Panc1 (cell line): ENCODE measurements at regions of chr2 and their contacts with region 1.

Region 1: DNA sequence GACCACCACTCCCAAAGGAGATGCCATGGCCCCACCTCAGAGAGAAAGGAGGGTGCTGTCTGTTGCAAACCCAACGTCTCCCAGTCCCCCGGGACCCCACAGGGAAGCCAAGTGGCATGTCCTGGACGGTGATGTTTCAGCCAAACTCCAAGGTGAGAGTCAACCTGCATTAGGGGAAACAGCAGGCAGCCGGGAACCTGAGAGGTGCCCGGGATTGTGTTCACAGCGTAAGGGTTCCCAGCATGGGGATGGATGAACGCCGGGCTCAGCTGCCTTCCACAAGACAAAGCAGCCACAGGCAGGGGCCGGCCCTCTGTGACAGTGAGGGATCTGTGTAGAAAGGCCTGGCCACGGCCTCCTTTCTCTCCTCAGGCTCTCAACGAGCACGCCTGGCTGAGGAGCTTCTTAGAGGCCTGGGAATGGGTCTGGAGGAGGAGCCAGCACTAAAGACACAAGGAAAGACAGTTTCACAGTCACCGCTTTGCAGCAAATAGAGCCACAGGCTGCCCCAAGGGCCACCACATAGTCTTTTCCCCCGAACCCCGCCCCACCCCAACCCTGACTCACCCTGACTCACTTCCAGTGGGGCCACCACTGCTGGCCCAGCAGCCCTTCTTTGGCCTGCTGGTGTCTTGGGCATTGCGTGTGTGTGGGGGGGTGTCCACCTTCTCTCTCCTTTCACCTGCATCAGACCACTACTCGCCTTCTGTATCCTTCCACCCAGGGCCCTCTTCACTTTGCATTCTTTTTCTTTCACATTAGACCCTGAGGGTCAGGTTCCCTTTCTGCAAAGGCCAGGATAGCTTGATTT is 19.6 kb upstream of the HPCAL1 start:
- DNase-seq: peak; percentile 86
- ATAC-seq: peak; percentile 69
- H3K4me3 ChIP-seq: peak overlapping the region in 1 of 2 experiments; percentile 11; a peak in 2 of 4 replicates
- H3K27ac ChIP-seq: peak overlapping the region; percentile 82
- H3K4me1 ChIP-seq: peaks cover 63% of the 10 kb centered on the region
- H3K27me3 ChIP-seq: no peaks in the 10 kb centered on the region
- CTCF ChIP-seq: no peak

Region 2: GRCh38 chr2:10220902-10221391 is 62.2 kb before region 1 on chr2:
- CTCF ChIA-PET with region 1: no interaction called
- POLR2A ChIA-PET with region 1: interaction called, 13 read pairs
- in situ Hi-C with region 1: no loop called
- intact Hi-C with region 1: no loop called
- DNase-seq: no peak
- ATAC-seq: no peak
- H3K4me3 ChIP-seq: no peak overlapping the region
- H3K27ac ChIP-seq: no peak overlapping the region
- H3K4me1 ChIP-seq: no peaks in the 10 kb centered on the region
- H3K27me3 ChIP-seq: no peaks in the 10 kb centered on the region
- CTCF ChIP-seq: no peak

Region 3: DNA sequence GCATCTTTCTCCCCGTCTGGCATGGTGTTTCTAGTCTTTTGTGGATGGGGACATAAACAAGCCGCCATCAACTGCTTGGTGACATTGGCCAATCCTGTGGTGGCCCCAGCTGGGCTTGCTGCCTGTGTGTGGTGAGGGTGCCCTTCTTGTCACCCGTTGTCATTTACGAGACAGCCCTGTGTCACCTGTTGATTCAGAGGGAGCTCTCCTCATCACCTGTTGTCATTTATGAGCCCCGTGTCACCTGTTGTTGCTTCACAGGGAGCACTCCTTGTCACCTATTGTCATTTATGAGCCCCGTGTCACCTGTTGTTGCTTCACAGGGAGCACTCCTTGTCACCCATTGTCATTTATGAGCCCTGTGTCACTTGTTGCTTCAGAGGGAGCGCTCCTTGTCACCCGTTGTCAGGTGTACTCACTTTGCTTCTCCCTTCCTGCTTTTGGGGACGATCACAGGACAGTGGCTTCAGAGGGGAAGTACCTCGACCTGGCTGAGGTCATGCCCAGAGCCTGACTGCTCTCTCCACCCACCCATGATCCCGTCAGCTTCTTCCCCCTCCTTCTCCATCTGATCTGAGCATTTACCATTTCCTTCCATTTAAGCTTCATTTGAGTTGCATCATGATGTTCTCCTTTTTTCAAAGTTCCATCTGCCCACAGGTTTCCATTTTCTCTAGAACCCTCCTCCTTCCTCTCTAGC is 48.7 kb after region 1 on chr2:
- CTCF ChIA-PET with region 1: interaction called, 5 read pairs
- POLR2A ChIA-PET with region 1: interaction called, 14 read pairs
- in situ Hi-C with region 1: no loop called
- intact Hi-C with region 1: no loop called
- DNase-seq: no peak
- ATAC-seq: no peak
- H3K4me3 ChIP-seq: peak overlapping the region in 1 of 2 experiments; percentile 51; a peak in 2 of 4 replicates
- H3K27ac ChIP-seq: peak overlapping the region; percentile 99
- H3K4me1 ChIP-seq: peaks cover 86% of the 10 kb centered on the region
- H3K27me3 ChIP-seq: no peaks in the 10 kb centered on the region
- CTCF ChIP-seq: no peak